Lower leg skin (tissue), 4 donors: ENCODE measurements at regions of chr14 and their contacts with region 1.

Region 1: GRCh38 chr14:81269100-81269978 is 48.6 kb upstream of the GTF2A1 start:
- DNase-seq: peak in 1 of 2 donors; percentile 55
- H3K4me3 ChIP-seq: no peak overlapping the region
- CTCF ChIP-seq: peak in 1 of 3 donors; percentile 73
- POLR2A ChIP-seq: no peak

Region 2: GRCh38 chr14:81113176-81113575 is 156.2 kb before region 1 on chr14:
- intact Hi-C with region 1: no loop called
- DNase-seq: no peak
- H3K4me3 ChIP-seq: no peak overlapping the region
- CTCF ChIP-seq: no peak
- POLR2A ChIP-seq: no peak

Region 3: DNA sequence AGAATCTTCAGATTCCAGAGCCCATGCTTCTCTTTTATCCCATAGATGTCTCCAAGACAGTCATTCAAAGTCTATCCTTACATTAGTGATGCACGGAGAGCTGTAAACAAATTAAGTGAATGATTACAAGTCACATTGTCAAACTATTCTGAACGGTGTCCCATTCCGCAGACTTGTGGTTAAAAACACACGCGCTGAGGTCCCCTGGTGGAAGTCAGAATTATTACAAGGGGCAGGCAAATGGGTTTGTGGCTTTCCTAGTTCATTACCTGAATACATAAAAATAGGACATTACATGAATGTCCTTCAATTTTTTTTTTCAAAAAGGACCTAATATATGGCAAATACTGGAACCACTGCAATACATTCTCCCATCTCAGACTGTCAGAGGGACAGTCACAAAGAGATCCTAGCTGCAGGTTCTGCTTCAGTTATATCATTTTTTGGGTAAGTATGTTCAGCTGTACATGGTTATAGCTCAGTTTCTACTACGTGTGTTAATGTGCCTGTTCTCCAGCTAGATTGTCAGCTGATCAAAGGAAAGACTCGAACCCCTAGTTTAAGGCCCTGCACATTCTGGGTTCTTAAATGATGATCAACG is 183.9 kb after region 1 on chr14:
- intact Hi-C with region 1: loop called (anchors 5 kb)
- DNase-seq: peak in 1 of 2 donors; percentile 43
- H3K4me3 ChIP-seq: no peak overlapping the region
- CTCF ChIP-seq: peak in 1 of 3 donors; percentile 80
- POLR2A ChIP-seq: no peak